GM10248 (cell line): ENCODE measurements at regions of chr15 and their contacts with region 1.

Region 1: DNA sequence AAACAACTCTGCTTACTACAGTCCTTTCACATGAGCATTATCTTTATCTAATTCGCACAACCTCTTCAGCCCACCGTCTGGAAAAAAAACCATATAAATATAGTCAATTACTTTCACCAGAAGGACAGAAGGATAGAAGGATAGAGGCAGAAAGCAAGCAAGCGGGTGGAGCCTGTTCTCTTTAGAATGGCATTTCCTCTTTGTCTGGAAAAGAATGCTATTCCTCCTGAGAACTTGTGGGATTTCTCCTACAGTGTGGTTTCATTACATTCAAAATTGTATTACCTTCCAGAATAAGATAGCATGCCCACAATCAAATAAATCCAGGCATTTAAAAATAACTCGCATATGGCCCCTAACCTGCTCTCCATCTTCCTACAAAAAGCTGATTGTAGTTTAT is 23.1 kb downstream of the SLC30A4 start:
- DNase-seq: no peak
- CTCF ChIP-seq: no peak

Region 2: GRCh38 chr15:45510758-45511280 is 11.4 kb after region 1 on chr15:
- CTCF ChIA-PET with region 1: interaction called, 18 read pairs
- POLR2A ChIA-PET with region 1: no interaction called
- DNase-seq: no peak
- CTCF ChIP-seq: no peak

Region 3: GRCh38 chr15:45521596-45522327 is 22.3 kb after region 1 on chr15:
- CTCF ChIA-PET with region 1: interaction called, 15 read pairs
- POLR2A ChIA-PET with region 1: no interaction called
- DNase-seq: peak; percentile 38
- CTCF ChIP-seq: no peak